Activated B cell treated with CpG ODN at 0.5 μM for 24 hours (primary cell): ENCODE measurements at regions of chr6 and their contacts with region 1.

Region 1: GRCh38 chr6:130047088-130047995 is 29.0 kb downstream of the L3MBTL3 start:
- DNase-seq: no peak
- ATAC-seq: no peak
- H3K4me3 Mint-ChIP-seq: no peak overlapping the region
- H3K27ac Mint-ChIP-seq: no peak overlapping the region
- H3K4me1 Mint-ChIP-seq: no peaks in the 10 kb centered on the region
- H3K27me3 Mint-ChIP-seq: no peaks in the 10 kb centered on the region
- CTCF ChIP-seq: no peak

Region 2: DNA sequence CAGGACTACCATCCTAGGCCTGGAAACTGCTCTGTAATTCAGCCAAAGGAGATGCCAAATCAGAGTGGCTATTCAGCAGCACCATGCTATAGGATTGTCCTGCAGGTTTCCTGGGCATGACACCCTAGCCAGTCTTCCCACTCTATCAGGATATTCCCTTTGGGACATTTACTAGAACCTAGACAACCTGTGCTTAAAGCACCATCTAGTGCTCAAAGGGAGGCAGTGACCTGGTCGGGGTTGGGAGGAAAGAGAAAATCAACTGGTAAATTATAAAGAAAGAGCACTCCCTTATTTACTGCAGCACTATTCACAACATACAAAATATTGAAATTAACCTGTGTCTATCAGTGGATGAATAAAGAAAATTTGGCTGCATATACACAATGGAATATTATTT is 712.7 kb after region 1 on chr6:
- CTCF ChIA-PET with region 1: no interaction called
- POLR2A ChIA-PET with region 1: no interaction called
- intact Hi-C with region 1: no loop called
- DNase-seq: no peak
- ATAC-seq: no peak
- H3K4me3 Mint-ChIP-seq: no peak overlapping the region
- H3K27ac Mint-ChIP-seq: no peak overlapping the region
- H3K4me1 Mint-ChIP-seq: peaks cover 8% of the 10 kb centered on the region
- H3K27me3 Mint-ChIP-seq: peaks cover 5% of the 10 kb centered on the region
- CTCF ChIP-seq: no peak

Region 3: DNA sequence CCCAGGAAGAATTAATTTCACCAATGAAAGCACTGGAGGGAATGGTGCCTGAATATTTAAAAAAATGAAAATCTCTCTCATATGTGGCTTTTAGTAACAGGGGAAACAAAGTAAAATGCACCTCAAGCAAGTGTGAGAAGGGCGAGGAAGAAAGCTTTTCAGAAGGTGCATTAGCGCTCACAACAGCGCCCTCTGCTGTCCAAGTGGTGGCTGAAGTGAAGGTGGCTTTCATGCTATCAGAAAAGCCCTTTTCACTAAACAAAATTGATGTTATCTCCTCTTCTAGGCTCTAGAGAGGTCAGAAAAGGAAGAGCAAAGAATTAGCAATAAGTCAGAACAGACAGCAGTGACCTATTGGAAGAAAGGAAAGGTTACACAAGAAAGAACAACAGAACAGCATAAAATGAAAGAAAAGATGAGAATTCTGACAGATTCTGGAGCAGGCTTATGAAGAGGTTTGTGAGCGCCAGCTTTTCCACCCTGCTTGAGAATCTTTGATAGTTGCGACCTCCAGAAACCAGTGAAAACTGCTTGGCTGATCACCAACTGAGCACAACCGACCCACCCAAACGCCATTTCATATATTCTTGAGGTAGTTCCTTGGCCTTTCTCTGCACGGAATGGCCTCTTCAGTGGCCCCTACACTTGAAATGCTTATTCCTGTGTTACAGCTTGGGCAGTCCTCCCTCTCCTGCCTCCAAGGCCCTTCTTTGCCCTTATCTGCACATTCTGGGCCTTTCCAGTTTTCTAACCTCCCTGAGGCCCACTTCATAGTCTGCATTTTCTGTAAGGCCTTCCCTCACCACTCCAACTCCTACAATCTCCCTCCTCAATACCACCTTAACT is 825.1 kb after region 1 on chr6:
- CTCF ChIA-PET with region 1: no interaction called
- POLR2A ChIA-PET with region 1: no interaction called
- intact Hi-C with region 1: loop called (anchors 5 kb)
- DNase-seq: peak; percentile 37
- ATAC-seq: no peak
- H3K4me3 Mint-ChIP-seq: no peak overlapping the region
- H3K27ac Mint-ChIP-seq: no peak overlapping the region
- H3K4me1 Mint-ChIP-seq: peaks cover 4% of the 10 kb centered on the region
- H3K27me3 Mint-ChIP-seq: no peaks in the 10 kb centered on the region
- CTCF ChIP-seq: peak; percentile 82